T-cell (primary cell): ENCODE measurements at regions of chr10 and their contacts with region 1.

Region 1: DNA sequence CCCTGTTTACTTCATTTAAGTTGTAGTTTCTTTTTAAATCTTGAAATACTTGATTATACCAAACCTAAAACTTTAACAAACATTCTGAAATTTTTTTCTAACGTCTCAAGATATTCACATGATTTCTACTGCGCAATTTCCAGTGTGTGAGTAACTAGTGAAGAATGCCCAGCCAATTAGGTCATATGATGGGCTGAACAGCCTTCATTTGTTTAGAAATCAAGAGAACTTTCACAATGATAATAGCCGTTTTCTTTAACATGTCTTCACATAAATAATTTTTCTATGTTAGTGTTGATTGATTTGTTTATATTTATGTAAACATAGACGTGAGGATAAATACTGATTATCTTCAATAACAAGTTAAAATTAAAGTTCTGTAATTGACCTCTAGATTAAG is 21.8 kb downstream of the STAM start:
- DNase-seq: no peak
- ATAC-seq: no peak
- H3K4me3 ChIP-seq: no peak overlapping the region
- H3K4me3 Mint-ChIP-seq: no peak overlapping the region
- H3K27ac ChIP-seq: no peak overlapping the region
- H3K27ac Mint-ChIP-seq: no peak overlapping the region
- H3K4me1 ChIP-seq: peaks cover 3 to 5% of the 10 kb centered on the region in 2 experiments
- H3K4me1 Mint-ChIP-seq: peaks cover 65 to 72% (median 67%) of the 10 kb centered on the region in 3 donors
- H3K27me3 ChIP-seq: no peaks in the 10 kb centered on the region
- H3K27me3 Mint-ChIP-seq: no peaks in the 10 kb centered on the region

Region 2: DNA sequence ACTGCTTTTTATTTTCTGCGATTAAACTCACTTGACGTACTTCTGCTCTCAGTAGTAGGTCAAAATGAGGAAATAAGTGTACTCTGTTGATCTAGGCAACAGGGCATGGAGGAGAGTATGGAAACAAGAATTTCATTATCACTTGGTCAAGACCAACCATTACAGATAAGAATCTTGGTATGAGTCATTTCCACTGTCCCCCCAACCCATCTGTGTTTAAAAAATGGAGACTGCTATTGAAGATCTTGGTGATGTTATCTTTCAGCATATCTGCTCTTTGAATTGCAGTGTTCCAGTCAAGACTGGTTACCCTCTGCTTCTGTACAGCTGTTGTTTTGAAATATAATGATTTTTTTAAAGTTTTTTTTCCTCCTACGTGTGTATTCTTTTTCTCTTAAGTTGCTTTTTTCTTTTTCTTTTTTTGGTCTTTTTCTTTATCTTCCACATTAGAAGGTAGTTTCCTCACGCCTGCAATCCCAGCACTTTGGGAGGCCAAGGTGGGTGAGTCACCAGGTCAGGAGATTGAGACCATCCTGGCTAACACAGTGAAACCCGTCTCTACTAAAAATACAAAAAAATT is 10.1 kb before region 1 on chr10:
- CTCF ChIA-PET with region 1: interaction called in 1 of 2 experiments, 3 read pairs
- POLR2A ChIA-PET with region 1: interaction called in 1 of 2 experiments, 17 read pairs
- DNase-seq: peak in 1 of 35 experiments; percentile 19
- ATAC-seq: peak; percentile 19 to 57 (median 53)
- H3K4me3 ChIP-seq: no peak overlapping the region
- H3K4me3 Mint-ChIP-seq: peak overlapping the region; percentile 27 to 37 (median 28)
- H3K27ac ChIP-seq: peak overlapping the region; percentile 53
- H3K27ac Mint-ChIP-seq: peak overlapping the region; percentile 6 to 77
- H3K4me1 ChIP-seq: peaks cover 6 to 10% of the 10 kb centered on the region in 2 experiments
- H3K4me1 Mint-ChIP-seq: peaks cover 70 to 78% (median 75%) of the 10 kb centered on the region in 3 donors
- H3K27me3 ChIP-seq: no peaks in the 10 kb centered on the region
- H3K27me3 Mint-ChIP-seq: no peaks in the 10 kb centered on the region

Region 3: GRCh38 chr10:17685233-17685840 is 19.6 kb after region 1 on chr10:
- CTCF ChIA-PET with region 1: interaction called in 1 of 2 experiments, 3 read pairs
- POLR2A ChIA-PET with region 1: interaction called in 1 of 2 experiments, 10 read pairs
- DNase-seq: peak in 7 of 35 experiments; percentile 2 to 49 (median 5)
- ATAC-seq: peak in 1 of 4 experiments; percentile 55
- H3K4me3 ChIP-seq: no peak overlapping the region
- H3K4me3 Mint-ChIP-seq: peak overlapping the region in 1 of 3 donors; percentile 6
- H3K27ac ChIP-seq: no peak overlapping the region
- H3K27ac Mint-ChIP-seq: no peak overlapping the region
- H3K4me1 ChIP-seq: peaks cover 2 to 8% of the 10 kb centered on the region in 2 experiments
- H3K4me1 Mint-ChIP-seq: peaks cover 39 to 46% (median 40%) of the 10 kb centered on the region in 3 donors
- H3K27me3 ChIP-seq: no peaks in the 10 kb centered on the region
- H3K27me3 Mint-ChIP-seq: no peaks in the 10 kb centered on the region

Region 4: DNA sequence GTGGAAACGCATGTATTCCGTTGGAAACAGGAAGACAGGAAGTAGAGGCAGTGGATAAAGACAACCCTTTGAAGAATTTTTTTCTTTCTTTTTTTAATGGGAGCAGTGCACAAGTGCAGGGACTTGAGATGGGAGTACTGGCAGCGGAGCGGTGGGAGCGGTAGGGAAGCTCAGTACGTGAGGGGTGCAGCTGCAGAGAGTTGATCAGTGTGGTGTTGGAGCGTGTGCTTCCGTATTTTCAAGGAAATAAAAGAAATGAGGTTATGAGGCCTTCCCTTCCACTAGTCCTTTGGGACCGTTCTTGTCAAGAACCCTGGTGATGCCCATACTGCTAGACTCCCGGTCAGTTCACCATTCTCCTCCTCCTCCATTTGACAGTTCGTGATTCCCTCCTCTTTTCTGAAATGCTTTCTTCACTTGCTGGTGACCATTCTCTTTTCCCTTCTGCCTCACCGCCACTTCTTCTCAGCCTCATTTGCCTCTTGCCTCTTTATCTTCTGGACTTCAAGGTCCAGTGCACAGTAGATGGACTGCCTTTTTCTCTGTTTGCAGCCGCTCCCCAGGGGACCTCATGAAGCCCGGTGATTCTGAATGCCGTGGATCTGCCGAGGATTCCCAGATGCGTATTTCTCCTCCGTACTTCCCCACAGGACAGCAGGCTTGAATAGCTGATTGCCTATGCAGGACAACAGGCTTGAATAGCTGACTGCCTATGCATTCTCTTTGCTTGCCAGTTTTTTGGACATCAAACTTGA is 47.1 kb after region 1 on chr10:
- CTCF ChIA-PET with region 1: no interaction called
- POLR2A ChIA-PET with region 1: no interaction called
- DNase-seq: no peak
- ATAC-seq: no peak
- H3K4me3 ChIP-seq: no peak overlapping the region
- H3K4me3 Mint-ChIP-seq: no peak overlapping the region
- H3K27ac ChIP-seq: no peak overlapping the region
- H3K27ac Mint-ChIP-seq: no peak overlapping the region
- H3K4me1 ChIP-seq: no peaks in the 10 kb centered on the region
- H3K4me1 Mint-ChIP-seq: no peaks in the 10 kb centered on the region
- H3K27me3 ChIP-seq: no peaks in the 10 kb centered on the region
- H3K27me3 Mint-ChIP-seq: no peaks in the 10 kb centered on the region